ENCODE measurements at regions of chr3 and their contacts with region 1.

Region 1: GRCh38 chr3:112561731-112562688 is at the starts of genes ATG3 and SLC35A5:
- DNase-seq: peak; percentile 99
- ATAC-seq: peak; percentile 80
- H3K4me3 Mint-ChIP-seq: peak within 1 kb of the TSS; percentile 99
- H3K27ac Mint-ChIP-seq: peak within 1 kb of the TSS; percentile 99
- H3K4me1 Mint-ChIP-seq: peaks cover 50% of the 10 kb centered on the region
- H3K27me3 Mint-ChIP-seq: no peaks in the 10 kb centered on the region
- CTCF ChIP-seq: no peak
- total RNA-seq, gene ATG3: 48.3 and 54.9 TPM in 2 replicates
- total RNA-seq, gene SLC35A5: 25.1 and 26.6 TPM in 2 replicates

Region 2: GRCh38 chr3:112327371-112327951 is 234.5 kb before region 1 on chr3:
- CTCF ChIA-PET with region 1: no interaction called
- POLR2A ChIA-PET with region 1: interaction called, 13 read pairs
- intact Hi-C with region 1: loop called (anchors 1 kb)
- DNase-seq: no peak
- ATAC-seq: peak; percentile 100
- H3K4me3 Mint-ChIP-seq: no peak overlapping the region
- H3K27ac Mint-ChIP-seq: no peak overlapping the region
- H3K4me1 Mint-ChIP-seq: peaks cover 17% of the 10 kb centered on the region
- H3K27me3 Mint-ChIP-seq: no peaks in the 10 kb centered on the region
- CTCF ChIP-seq: no peak

Region 3: DNA sequence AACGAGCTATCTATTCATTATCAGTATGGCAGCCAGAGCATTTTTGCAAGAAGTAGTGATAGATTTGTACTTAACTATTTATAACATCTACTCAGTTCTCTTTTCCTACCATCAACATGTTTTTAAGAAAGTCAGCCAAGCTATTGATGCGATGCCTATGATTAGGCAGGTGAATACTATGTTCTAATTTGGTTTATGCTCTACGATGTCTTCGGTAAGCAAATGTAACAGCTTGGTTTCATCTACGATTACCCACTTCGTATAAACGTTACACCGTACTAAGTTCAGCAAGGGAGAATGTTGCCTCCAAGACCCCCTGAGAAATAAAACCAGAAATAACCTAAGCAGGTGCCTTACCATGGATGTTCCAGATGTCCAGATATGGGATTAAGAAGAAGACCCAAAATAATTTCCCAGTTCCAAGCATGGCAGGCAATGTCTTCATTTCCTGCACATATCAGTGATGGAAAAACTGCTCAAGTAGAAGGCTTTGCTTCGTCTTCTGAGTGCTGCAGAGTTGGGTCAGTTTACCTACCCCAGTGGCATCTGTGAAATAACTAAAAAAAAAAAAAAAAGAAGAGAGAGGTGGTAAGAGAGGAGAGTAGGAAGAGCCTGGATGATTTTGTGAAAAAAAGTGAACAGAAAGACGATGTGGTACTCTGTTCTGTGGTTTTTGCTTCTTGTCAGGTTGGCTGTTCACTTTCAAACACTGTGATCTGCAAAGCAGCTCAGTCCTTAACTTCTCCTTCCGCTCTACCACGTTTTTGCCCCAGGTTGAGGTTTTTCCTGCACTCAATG is 62.9 kb before region 1 on chr3 and contains the start of gene BTLA:
- CTCF ChIA-PET with region 1: no interaction called
- POLR2A ChIA-PET with region 1: interaction called, 17 read pairs
- intact Hi-C with region 1: no loop called
- DNase-seq: no peak
- ATAC-seq: peak; percentile 68
- H3K4me3 Mint-ChIP-seq: peak within 1 kb of the TSS; percentile 92
- H3K27ac Mint-ChIP-seq: peak within 1 kb of the TSS; percentile 99
- H3K4me1 Mint-ChIP-seq: peaks cover 82% of the 10 kb centered on the region
- H3K27me3 Mint-ChIP-seq: no peaks in the 10 kb centered on the region
- CTCF ChIP-seq: no peak
- total RNA-seq, gene BTLA: 49.8 and 53.2 TPM in 2 replicates

Region 4: DNA sequence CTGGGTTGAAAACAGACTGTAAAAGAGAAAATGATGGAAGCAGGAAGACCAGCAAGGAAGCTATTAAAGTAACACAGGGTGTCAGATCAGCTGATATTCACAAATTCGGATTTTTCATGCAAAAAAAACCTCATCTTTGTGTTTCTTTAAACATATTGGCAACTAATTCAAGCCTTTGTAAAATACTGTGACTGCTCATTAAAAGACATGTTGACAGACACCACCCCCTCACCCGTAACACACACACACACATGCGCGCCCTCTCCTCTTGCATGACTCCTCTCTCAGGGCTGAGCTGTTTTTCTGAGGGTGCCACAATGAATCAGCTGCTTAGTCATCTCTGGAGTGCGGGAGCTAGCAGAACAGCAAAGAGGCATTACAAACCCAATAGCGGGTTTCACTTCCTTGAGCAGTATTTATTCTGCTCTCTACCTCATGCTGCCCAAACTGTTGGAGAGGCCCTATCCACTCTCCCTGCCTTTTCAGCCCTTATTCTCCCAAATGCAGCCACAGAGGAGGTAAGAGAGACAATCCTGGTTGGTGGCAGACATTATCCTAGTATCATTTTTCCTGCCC is 114.7 kb after region 1 on chr3:
- CTCF ChIA-PET with region 1: no interaction called
- POLR2A ChIA-PET with region 1: no interaction called
- intact Hi-C with region 1: loop called (anchors 1 kb)
- DNase-seq: peak; percentile 57
- ATAC-seq: peak; percentile 98
- H3K4me3 Mint-ChIP-seq: peak overlapping the region; percentile 67
- H3K27ac Mint-ChIP-seq: peak overlapping the region; percentile 84
- H3K4me1 Mint-ChIP-seq: peaks cover 25% of the 10 kb centered on the region
- H3K27me3 Mint-ChIP-seq: peaks cover 8% of the 10 kb centered on the region
- CTCF ChIP-seq: no peak

Region 5: GRCh38 chr3:113019182-113020137 is 457.4 kb after region 1 on chr3:
- CTCF ChIA-PET with region 1: interaction called, 3 read pairs
- POLR2A ChIA-PET with region 1: interaction called, 11 read pairs
- intact Hi-C with region 1: no loop called
- DNase-seq: peak; percentile 81
- ATAC-seq: peak; percentile 87
- H3K4me3 Mint-ChIP-seq: peak overlapping the region; percentile 92
- H3K27ac Mint-ChIP-seq: peak overlapping the region; percentile 95
- H3K4me1 Mint-ChIP-seq: peaks cover 54% of the 10 kb centered on the region
- H3K27me3 Mint-ChIP-seq: no peaks in the 10 kb centered on the region
- CTCF ChIP-seq: no peak